ENCODE measurements at regions of chr1 and their contacts with region 1.

Region 1: DNA sequence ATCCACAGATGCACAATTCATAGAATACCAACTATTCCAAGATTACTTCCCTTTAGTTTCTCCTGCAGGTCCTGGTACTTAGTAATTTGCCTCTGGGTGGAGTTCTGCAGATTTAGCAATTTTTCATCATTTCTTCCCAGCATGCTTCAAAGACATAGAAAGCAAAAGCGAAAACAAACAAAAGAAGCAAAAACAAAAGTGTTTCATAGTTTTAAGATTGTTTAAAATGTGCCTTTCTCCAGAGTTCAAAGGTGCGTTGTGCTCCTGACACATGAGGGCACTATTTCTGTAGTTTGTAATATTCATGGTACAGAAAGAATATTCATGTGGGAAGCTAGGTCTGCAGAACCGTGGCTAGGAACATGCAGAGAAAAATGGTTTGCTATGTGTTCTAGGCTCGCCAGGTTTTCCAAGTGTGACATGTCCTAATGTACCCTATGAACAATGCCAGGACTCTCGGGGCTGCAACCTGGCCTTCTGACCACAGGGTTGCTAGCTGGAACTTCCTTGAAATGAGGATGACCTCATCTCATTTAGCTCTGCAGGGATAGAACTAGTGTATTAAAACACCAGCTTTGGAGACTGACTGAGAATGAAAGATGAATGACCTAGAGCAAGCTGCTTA is 30.0 kb upstream of the RCSD1 start:
- DNase-seq: peak in 1 of 2 donors; percentile 77
- H3K4me3 ChIP-seq: no peak overlapping the region
- H3K27ac ChIP-seq: peak overlapping the region in 3 of 5 donors; percentile 42 to 83 (median 75)
- H3K4me1 ChIP-seq: peaks cover 14 to 37% (median 26%) of the 10 kb centered on the region in 4 donors
- H3K27me3 ChIP-seq: no peaks in the 10 kb centered on the region
- CTCF ChIP-seq: peak in 5 of 7 experiments; percentile 27 to 51 (median 40)
- EP300 ChIP-seq: no peak
- POLR2A ChIP-seq: no peak

Region 2: DNA sequence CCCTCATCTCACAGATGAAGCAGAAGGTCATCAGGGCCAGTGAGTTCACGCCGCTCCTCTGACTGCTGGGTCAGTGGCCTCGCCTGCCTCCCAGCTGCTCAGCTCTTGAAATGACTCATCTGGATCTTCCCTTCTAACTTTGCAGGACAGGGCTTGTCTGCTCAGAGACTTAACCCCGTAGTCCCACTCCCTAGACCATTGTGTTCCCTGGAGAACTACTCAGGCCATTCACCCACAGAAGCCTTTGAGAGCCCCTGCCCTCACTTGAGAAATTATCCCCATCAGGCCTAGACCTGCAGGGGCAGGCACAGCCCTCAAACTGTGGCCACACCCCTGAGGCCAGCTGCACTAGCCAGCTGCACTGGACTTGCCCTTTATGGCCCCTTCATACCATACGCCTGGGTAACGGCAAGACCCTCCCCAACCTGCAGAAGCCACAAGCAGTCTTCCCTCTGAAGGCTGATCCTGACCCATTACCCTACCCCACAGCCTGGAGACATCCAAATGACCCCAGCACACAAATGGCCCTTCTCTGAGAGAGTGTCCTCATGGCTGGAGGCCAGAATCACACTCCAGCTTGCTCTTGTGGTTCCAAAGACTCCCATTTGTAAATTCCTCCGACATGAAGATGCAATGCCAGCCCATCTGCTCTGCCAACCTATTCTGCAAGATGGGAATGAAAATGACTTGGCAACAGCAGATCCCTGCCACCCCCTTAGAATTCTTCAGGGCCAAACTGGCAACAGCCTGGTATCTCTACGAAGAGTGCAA is 63.1 kb after region 1 on chr1:
- intact Hi-C with region 1: no loop called
- DNase-seq: peak in 1 of 2 donors; percentile 31
- H3K4me3 ChIP-seq: no peak overlapping the region
- H3K27ac ChIP-seq: peak overlapping the region in 4 of 5 donors; percentile 37 to 76 (median 54)
- H3K4me1 ChIP-seq: peaks cover 23 to 71% (median 40%) of the 10 kb centered on the region in 4 donors
- H3K27me3 ChIP-seq: no peaks in the 10 kb centered on the region
- CTCF ChIP-seq: no peak
- EP300 ChIP-seq: no peak
- POLR2A ChIP-seq: no peak

Region 3: DNA sequence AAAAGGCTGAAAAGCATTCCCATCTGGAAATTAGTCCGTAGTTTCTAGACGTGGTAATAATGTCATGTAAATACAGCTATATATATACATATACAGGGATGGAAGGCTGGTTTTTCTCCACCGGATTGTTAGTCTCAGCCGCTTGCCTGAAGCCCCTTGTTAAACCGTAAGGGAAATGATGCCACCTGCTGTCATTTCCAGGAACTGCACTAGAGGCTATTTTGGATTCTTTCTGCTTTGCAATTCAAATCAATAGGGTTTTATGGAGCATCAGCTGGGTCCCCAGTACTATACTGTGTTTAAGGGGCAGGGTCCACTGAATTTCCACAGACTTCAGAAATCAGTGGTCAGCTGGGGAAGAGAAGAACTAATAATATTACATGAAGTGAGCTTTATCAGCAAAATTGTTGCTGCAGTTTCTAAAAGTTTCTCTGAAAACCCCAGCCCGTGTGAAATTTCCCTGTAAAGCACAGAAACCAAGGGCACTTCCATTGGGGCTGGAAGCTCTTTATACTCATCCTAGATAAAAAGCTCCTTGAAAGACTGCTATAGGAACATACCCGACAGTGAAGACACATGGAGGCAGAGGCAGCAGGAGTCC is 88.0 kb after region 1 on chr1:
- intact Hi-C with region 1: loop called (anchors 5 kb)
- DNase-seq: peak; percentile 84 to 93
- H3K4me3 ChIP-seq: no peak overlapping the region
- H3K27ac ChIP-seq: peak overlapping the region in 1 of 5 donors; percentile 9
- H3K4me1 ChIP-seq: peaks cover 4 to 52% (median 27%) of the 10 kb centered on the region in 4 donors
- H3K27me3 ChIP-seq: no peaks in the 10 kb centered on the region
- CTCF ChIP-seq: peak in 5 of 7 experiments; percentile 85 to 96 (median 93)
- EP300 ChIP-seq: no peak
- POLR2A ChIP-seq: no peak

Region 4: DNA sequence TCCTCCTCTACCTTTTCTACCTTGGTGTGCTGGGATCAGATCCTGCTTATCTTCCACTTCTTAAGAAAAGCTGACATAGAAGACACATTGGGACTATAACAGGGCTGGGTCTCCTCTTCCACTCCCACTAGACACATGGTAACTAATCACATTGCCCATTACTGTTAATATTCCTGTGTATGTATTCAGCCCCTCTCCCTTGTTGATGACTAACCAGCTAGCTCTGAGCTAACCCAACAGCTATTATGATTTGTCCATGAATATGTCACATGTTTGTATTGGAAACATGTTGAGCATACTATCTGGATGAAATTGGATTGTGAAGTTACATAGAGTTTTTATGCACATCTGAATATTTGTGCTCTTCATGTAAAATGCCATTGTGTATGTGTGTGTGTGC is 174.6 kb after region 1 on chr1:
- intact Hi-C with region 1: no loop called
- DNase-seq: no peak
- H3K4me3 ChIP-seq: no peak overlapping the region
- H3K27ac ChIP-seq: no peak overlapping the region
- H3K4me1 ChIP-seq: no peaks in the 10 kb centered on the region
- H3K27me3 ChIP-seq: no peaks in the 10 kb centered on the region
- CTCF ChIP-seq: no peak
- EP300 ChIP-seq: no peak
- POLR2A ChIP-seq: no peak

Measured in stomach (tissue), 19 donors.